CD8-positive, alpha-beta memory T cell (primary cell): ENCODE measurements at regions of chr3 and their contacts with region 1.

Region 1: GRCh38 chr3:179732661-179733348 is 80.0 kb downstream of the USP13 start:
- DNase-seq: no peak
- H3K4me3 ChIP-seq: no peak overlapping the region
- H3K4me3 Mint-ChIP-seq: no peak overlapping the region
- H3K27ac ChIP-seq: no peak overlapping the region
- H3K27ac Mint-ChIP-seq: no peak overlapping the region
- H3K4me1 ChIP-seq: no peaks in the 10 kb centered on the region
- H3K4me1 Mint-ChIP-seq: no peaks in the 10 kb centered on the region
- H3K27me3 ChIP-seq: no peaks in the 10 kb centered on the region
- H3K27me3 Mint-ChIP-seq: peaks cover 0 to 2% of the 10 kb centered on the region in 2 donors

Region 2: DNA sequence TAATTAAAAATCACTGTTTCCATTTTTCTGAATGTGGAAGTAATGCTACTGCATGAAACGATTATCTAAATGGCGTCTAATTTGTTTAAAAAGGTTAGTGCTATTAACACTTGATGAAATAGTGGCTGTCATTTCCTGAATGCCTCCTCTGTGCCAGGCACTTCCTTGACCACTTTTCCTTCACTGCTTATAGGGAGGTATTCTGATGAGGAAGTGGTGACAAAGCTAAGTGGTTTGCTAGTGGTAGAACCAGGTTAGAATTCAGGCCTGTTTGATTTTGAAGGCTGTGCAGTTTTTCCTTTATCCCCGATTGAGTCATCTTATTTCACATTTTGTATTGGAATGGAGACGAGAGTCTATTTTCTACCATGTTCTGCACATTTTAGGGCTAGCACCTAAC is 39.0 kb after region 1 on chr3:
- CTCF ChIA-PET with region 1: no interaction called
- POLR2A ChIA-PET with region 1: interaction called, 15 read pairs
- DNase-seq: no peak
- H3K4me3 ChIP-seq: no peak overlapping the region
- H3K4me3 Mint-ChIP-seq: no peak overlapping the region
- H3K27ac ChIP-seq: no peak overlapping the region
- H3K27ac Mint-ChIP-seq: no peak overlapping the region
- H3K4me1 ChIP-seq: no peaks in the 10 kb centered on the region
- H3K4me1 Mint-ChIP-seq: peaks cover 0 to 4% (median 0%) of the 10 kb centered on the region in 3 donors
- H3K27me3 ChIP-seq: no peaks in the 10 kb centered on the region
- H3K27me3 Mint-ChIP-seq: no peaks in the 10 kb centered on the region